AG04450 (cell line): ENCODE measurements at regions of chr1 and their contacts with region 1.

Region 1: GRCh38 chr1:92831762-92832536 is at the start of gene RPL5:
- DNase-seq: peak; percentile 96
- H3K4me3 ChIP-seq: peak within 1 kb of the TSS; percentile 97
- H3K27ac ChIP-seq: peak within 1 kb of the TSS; percentile 74
- H3K27me3 ChIP-seq: no peaks in the 10 kb centered on the region
- CTCF ChIP-seq: peak; percentile 94
- polyA plus RNA-seq, gene RPL5: 2,179 and 2,752 TPM in 2 replicates

Region 2: GRCh38 chr1:92784639-92785500 is 47.1 kb before region 1 on chr1 and contains the start of gene EVI5:
- CTCF ChIA-PET with region 1: interaction called, 15 read pairs
- POLR2A ChIA-PET with region 1: interaction called, 31 read pairs
- DNase-seq: peak; percentile 94
- H3K4me3 ChIP-seq: peak within 1 kb of the TSS; percentile 82
- H3K27ac ChIP-seq: peak within 1 kb of the TSS; percentile 90
- H3K27me3 ChIP-seq: no peaks in the 10 kb centered on the region
- CTCF ChIP-seq: no peak; the same call in 1 of the 2 replicates
- polyA plus RNA-seq, gene EVI5: 19.9 and 28.5 TPM in 2 replicates

Region 3: DNA sequence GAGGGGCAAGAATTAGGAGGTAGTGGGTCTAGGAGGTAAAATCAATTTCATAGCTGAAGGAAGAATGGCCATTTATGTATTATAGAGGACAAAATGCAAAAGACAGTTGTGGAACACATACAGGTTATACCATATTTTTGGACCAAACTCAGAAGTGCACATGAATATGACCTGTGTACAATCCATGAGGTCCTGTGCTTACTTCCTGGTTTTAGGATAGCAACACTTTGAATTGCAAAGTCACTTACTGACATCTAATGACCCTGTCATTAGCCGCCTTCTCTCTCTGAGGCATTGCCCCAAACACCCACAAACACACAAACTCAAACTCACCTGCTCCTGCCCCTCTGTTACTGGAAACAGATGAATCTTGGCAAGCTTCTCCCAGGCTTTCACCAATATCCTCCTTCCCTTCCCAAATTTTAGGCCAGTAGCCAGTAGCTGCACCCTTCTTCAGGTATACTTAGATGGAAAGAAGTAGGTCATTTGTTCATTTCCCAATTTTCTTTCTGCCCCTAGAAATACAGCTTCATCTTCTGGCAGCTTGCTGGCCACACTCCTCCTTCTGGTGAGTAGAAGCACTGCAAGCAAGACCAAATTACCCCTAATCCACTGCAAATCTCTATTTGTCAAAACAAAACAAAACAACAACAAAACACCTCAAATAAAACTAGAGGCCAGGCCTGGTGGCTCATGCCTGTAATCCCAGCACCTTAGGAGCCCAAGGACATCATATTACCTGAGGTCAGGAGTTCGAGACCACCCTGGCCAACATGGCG is 13.8 kb before region 1 on chr1:
- CTCF ChIA-PET with region 1: interaction called, 12 read pairs
- POLR2A ChIA-PET with region 1: interaction called, 3 read pairs
- DNase-seq: no peak
- H3K4me3 ChIP-seq: no peak overlapping the region
- H3K27ac ChIP-seq: no peak overlapping the region
- H3K27me3 ChIP-seq: no peaks in the 10 kb centered on the region
- CTCF ChIP-seq: peak; percentile 74

Region 4: DNA sequence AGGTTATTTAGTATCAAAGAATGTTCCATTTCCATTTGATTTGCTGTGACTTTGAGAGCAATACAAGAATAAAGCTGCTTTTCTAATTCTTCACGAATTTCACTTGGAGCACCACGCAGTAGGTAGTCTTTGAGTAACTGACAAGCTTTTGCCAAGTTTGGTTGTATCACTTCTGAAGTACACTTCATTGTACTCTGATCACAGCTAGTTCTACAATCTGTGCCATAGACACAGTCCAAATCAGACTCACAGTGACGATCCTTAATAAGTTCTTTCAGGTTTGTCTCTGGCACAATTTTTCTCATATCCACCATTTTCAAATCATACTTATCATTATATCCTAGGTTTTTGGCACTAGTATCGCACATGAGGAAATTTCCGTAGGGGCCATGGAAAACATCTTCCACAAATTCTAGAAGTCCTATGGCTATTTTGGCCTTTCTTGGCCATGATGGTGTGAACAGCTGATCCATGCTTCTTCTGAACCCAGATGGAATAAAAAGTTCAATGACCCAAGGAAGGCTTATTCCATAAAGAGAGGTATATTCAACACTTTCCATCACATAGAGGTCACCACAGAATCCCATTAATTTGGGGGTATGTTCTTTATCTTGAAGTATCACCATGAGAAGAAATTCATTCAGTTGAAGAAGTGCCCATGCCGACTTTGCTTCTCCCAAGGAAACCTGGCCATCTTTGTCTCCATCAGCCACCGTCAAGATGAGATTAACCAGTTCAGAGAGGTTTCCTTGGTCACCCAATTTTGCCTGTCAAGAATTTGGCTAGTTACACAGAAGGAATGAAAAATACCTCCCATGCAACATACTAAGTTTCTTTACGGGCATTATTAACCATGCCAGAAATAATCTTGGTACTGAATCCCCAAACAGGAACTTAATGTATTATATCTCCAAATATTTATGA is 11.7 kb after region 1 on chr1:
- CTCF ChIA-PET with region 1: interaction called, 11 read pairs
- POLR2A ChIA-PET with region 1: interaction called, 19 read pairs
- DNase-seq: no peak
- H3K4me3 ChIP-seq: no peak overlapping the region
- H3K27ac ChIP-seq: no peak overlapping the region
- H3K27me3 ChIP-seq: no peaks in the 10 kb centered on the region
- CTCF ChIP-seq: no peak